ENCODE measurements at regions of chr7 and their contacts with region 1.

Region 1: GRCh38 chr7:148575640-148576411 is 14.7 kb upstream of the C7orf33 start:
- DNase-seq: peak; percentile 79
- H3K4me3 Mint-ChIP-seq: no peak overlapping the region
- H3K27ac Mint-ChIP-seq: no peak overlapping the region
- H3K4me1 Mint-ChIP-seq: peaks cover 7% of the 10 kb centered on the region
- H3K27me3 Mint-ChIP-seq: peaks cover 8% of the 10 kb centered on the region

Region 2: GRCh38 chr7:148563583-148564274 is 12.1 kb before region 1 on chr7:
- CTCF ChIA-PET with region 1: interaction called, 19 read pairs
- DNase-seq: no peak
- H3K4me3 Mint-ChIP-seq: peak overlapping the region; percentile 0
- H3K27ac Mint-ChIP-seq: peak overlapping the region; percentile 86
- H3K4me1 Mint-ChIP-seq: peaks cover 30% of the 10 kb centered on the region
- H3K27me3 Mint-ChIP-seq: peaks cover 16% of the 10 kb centered on the region

Region 3: DNA sequence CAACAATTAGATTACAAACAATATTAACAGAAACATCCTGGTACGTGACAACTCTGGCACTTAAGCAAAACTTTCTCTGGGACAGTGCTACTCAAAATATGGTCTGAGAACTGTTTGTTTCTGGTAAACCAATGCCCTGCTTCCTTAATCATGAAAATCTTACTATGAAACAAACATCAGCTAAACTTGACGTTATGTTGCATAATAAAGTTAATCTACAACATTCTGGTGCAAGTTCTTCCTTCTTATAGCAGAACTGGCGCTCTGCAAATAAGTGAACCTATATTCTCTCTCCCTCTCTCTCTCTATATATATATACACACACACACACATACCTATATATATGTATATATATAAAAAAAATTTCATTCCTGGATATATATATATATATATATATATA is 22.5 kb after region 1 on chr7:
- CTCF ChIA-PET with region 1: no interaction called
- DNase-seq: no peak
- H3K4me3 Mint-ChIP-seq: no peak overlapping the region
- H3K27ac Mint-ChIP-seq: no peak overlapping the region
- H3K4me1 Mint-ChIP-seq: no peaks in the 10 kb centered on the region
- H3K27me3 Mint-ChIP-seq: peaks cover 18% of the 10 kb centered on the region

Region 4: DNA sequence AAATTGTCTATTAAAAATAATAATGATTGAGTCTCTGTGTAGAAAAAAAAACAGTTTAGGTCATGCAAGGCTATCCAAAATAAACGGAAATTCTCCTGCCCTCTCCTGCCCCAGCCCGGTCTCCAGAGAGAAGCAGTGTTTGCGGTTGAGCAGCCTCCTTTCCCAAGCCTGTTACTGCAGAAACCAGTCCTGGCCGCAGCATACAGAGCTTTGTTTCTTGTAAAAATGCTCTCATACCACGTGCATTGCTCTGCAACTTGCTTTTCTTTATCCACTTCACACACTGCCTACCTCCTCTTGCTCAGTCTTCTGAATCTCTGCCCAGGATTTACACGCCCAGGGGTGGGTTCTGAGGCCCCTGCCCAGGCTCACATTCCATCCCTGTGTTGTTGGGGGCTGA is 88.5 kb after region 1 on chr7:
- CTCF ChIA-PET with region 1: no interaction called
- DNase-seq: no peak
- H3K4me3 Mint-ChIP-seq: no peak overlapping the region
- H3K27ac Mint-ChIP-seq: no peak overlapping the region
- H3K4me1 Mint-ChIP-seq: peaks cover 4% of the 10 kb centered on the region
- H3K27me3 Mint-ChIP-seq: no peaks in the 10 kb centered on the region